Activated T-helper 2 cell treated with anti-CD3 and anti-CD28 coated beads, Interferon-gamma antibody, Interleukin-2, Interleukin-4, amounts not matched to agents 10 μg/mL and 5 μg/mL and 100 μg/mL, durations not matched to agents 14 hours and 24 hours and 36 hours (primary cell): ENCODE measurements at regions of chr14 and their contacts with region 1.

Region 1: DNA sequence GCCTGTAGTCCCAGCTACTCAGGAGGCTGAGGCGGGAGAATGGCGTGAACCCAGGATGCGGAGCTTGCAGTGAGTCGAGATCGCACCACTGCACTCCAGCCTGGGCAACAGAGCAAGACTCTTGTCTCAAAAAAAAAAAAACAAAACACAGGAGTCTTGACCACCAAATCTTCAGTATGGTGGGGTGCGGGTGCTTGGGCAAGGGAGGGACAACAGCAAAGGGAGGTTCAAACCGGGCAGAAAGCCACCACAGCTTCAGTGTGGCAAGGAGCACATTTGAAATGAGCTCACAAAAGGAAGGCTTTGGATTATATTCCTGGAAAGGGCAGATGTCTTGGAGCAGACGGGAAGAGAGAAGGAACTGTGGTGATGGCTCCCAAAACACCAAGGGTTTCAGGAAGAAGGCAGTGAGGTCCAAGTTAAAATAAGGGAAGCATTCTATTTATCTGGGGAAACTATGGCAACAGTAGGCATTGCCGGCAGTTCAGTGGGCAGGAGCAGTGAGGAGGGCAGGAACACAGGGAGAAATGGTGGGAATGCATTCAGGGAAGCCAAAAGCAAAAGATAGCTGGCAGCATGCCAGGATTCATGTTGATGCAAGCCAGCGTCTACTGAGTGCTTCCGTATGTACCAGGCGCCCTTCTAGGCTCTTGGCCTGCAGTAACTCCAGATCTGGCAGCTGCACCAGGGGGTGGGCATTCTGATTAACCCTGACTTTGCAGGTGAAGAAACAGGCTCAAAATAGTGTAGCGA is 51.0 kb upstream of the SRSF5 start:
- DNase-seq: no peak
- H3K4me3 Mint-ChIP-seq: peak overlapping the region; percentile 47
- H3K27ac Mint-ChIP-seq: peak overlapping the region; percentile 87
- H3K4me1 Mint-ChIP-seq: peaks cover 68% of the 10 kb centered on the region
- H3K27me3 Mint-ChIP-seq: no peaks in the 10 kb centered on the region

Region 2: DNA sequence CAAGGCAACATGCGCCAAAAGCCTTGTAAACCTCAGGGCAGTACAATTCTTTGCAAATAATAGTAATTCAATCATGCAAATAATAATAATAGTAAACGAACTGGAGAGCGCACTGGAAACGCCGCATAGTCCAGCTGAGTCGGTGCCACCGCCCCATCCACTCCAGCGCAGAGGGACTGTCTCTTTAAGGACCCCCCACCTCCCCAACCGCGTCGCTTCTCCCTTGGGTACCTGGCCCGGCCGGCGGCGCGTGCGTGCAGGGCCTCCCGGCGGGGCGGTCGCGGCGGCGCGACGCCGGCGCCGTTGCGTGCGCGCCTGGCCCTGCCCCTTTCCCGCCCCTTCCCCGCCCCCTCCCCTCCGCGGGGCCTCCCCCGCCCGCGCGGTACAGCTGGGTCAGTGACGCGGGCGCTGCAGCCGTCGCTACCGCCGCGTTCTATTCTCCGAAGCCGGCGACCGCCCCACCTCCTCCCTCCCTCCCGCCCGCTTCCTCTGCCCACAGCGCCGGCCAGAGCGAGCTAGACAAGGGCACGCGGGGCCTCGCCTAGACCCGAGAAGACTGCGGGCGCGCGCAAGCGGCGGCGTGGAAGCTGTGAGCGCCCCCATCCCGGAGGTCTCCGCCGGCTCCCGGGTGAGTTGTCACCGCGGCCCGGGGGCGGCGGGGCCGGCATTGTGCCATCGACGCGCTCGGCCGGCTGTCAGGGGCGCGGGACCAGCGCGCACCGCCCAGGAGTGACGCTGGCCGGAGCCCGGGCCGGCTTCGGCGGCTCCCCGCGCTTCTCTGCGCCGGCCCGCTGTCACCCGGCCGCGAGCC is 104.5 kb before region 1 on chr14 and contains the start of gene SUSD6:
- intact Hi-C with region 1: loop called (anchors 2 kb)
- DNase-seq: peak; percentile 80
- H3K4me3 Mint-ChIP-seq: peak within 1 kb of the TSS; percentile 94
- H3K27ac Mint-ChIP-seq: peak within 1 kb of the TSS; percentile 97
- H3K4me1 Mint-ChIP-seq: peaks cover 52% of the 10 kb centered on the region
- H3K27me3 Mint-ChIP-seq: no peaks in the 10 kb centered on the region
- total RNA-seq, gene SUSD6: 46.6 and 46.7 TPM in 2 replicates

Region 3: GRCh38 chr14:69673578-69674305 is 42.2 kb before region 1 on chr14:
- intact Hi-C with region 1: loop called (anchors 1 kb)
- DNase-seq: no peak
- H3K4me3 Mint-ChIP-seq: peak overlapping the region; percentile 55
- H3K27ac Mint-ChIP-seq: peak overlapping the region; percentile 97
- H3K4me1 Mint-ChIP-seq: peaks cover 74% of the 10 kb centered on the region
- H3K27me3 Mint-ChIP-seq: no peaks in the 10 kb centered on the region

Region 4: DNA sequence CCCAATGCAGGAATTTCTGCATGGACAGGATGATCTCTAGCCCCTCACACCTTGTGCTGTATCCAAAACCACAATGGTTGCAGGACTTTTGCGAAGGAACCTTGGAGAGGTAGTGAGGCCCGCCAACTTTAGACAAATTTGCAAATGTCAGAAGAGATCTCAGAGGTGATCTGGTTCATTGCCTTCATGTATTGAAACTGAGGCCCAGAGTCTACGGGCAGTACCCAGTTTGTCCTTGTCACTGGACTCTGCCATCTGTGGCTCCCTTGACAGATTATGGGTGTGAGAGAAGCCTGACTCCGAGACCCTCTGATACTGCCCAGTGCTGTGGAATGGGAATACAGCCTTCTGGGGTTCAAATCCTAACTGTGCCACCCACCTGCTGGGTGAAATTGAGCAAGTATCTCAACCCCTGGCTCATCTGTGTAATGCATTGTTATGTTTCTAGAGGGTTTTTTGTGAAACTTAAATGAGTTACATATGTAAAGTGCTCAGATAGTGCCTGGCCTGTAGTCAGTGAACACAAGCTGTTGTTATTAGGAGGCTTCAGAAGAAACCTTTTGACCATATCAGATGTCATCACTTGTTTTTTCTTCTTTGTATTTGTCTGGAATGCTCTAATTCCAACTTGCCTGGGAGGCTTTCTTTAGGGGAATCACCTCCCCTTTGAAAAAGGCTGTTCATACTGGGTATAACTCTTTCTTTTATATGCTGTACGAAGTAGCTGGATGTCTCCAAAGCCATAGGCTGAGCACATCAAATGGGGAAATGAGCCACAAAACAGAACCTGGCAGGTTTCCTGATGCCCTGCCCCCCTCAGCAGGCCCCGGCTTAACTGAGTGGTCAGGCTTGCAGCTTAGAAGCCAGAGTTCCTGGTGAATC is 20.3 kb before region 1 on chr14:
- intact Hi-C with region 1: loop called (anchors 2 kb)
- DNase-seq: no peak
- H3K4me3 Mint-ChIP-seq: no peak overlapping the region
- H3K27ac Mint-ChIP-seq: peak overlapping the region; percentile 47
- H3K4me1 Mint-ChIP-seq: peaks cover 69% of the 10 kb centered on the region
- H3K27me3 Mint-ChIP-seq: no peaks in the 10 kb centered on the region